ENCODE measurements at regions of chr13 and their contacts with region 1.

Region 1: GRCh38 chr13:103898481-103898880 is 832.3 kb upstream of the SLC10A2 start:
- DNase-seq: no peak
- ATAC-seq: no peak
- H3K4me3 ChIP-seq: no peak overlapping the region
- H3K27ac ChIP-seq: no peak overlapping the region
- H3K4me1 ChIP-seq: no peaks in the 10 kb centered on the region
- H3K27me3 ChIP-seq: no peaks in the 10 kb centered on the region
- CTCF ChIP-seq: no peak
- POLR2A ChIP-seq: no peak
- RAD21 ChIP-seq: no peak

Region 2: GRCh38 chr13:103557878-103558277 is 340.6 kb before region 1 on chr13:
- CTCF ChIA-PET with region 1: no interaction called
- POLR2A ChIA-PET with region 1: no interaction called
- RAD21 ChIA-PET with region 1: no interaction called
- intact Hi-C with region 1: no loop called
- DNase-seq: no peak
- ATAC-seq: no peak
- H3K4me3 ChIP-seq: no peak overlapping the region
- H3K27ac ChIP-seq: no peak overlapping the region
- H3K4me1 ChIP-seq: no peaks in the 10 kb centered on the region
- H3K27me3 ChIP-seq: no peaks in the 10 kb centered on the region
- CTCF ChIP-seq: no peak
- POLR2A ChIP-seq: no peak
- RAD21 ChIP-seq: no peak

Region 3: DNA sequence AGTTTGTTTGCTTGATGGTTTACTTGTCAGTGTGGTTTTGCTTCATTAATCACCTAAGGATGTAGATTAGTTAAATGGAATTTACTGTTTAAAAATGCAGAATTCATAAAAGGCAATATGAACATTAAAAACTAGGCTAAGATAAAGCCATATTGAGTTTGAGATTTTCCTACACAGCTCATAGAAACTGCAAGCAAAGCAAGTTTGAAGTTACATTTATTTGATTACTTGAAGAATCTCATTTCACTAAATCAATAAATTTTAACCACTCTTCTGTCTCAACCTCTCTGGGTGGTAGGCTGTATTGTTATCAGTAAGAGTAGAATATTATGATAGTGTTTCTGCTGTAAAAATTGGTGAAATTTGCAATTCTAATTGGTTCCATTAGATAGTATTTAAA is 348.5 kb after region 1 on chr13:
- CTCF ChIA-PET with region 1: no interaction called
- POLR2A ChIA-PET with region 1: no interaction called
- RAD21 ChIA-PET with region 1: no interaction called
- intact Hi-C with region 1: loop called (anchors 10 kb)
- DNase-seq: no peak
- ATAC-seq: no peak
- H3K4me3 ChIP-seq: no peak overlapping the region
- H3K27ac ChIP-seq: no peak overlapping the region
- H3K4me1 ChIP-seq: no peaks in the 10 kb centered on the region
- H3K27me3 ChIP-seq: no peaks in the 10 kb centered on the region
- CTCF ChIP-seq: no peak
- POLR2A ChIP-seq: no peak
- RAD21 ChIP-seq: no peak

Measured in HCT116 (cell line).